IMR-90 (cell line): ENCODE measurements at regions of chr11 and their contacts with region 1.

Region 1: GRCh38 chr11:63783925-63784592 is 15.5 kb upstream of the ZFTA start:
- DNase-seq: no peak
- ATAC-seq: no peak
- H3K4me3 ChIP-seq: no peak overlapping the region
- H3K27ac ChIP-seq: no peak overlapping the region
- H3K4me1 ChIP-seq: no peaks in the 10 kb centered on the region
- H3K27me3 ChIP-seq: no peaks in the 10 kb centered on the region
- CTCF ChIP-seq: no peak
- POLR2A ChIP-seq: no peak
- RAD21 ChIP-seq: no peak

Region 2: DNA sequence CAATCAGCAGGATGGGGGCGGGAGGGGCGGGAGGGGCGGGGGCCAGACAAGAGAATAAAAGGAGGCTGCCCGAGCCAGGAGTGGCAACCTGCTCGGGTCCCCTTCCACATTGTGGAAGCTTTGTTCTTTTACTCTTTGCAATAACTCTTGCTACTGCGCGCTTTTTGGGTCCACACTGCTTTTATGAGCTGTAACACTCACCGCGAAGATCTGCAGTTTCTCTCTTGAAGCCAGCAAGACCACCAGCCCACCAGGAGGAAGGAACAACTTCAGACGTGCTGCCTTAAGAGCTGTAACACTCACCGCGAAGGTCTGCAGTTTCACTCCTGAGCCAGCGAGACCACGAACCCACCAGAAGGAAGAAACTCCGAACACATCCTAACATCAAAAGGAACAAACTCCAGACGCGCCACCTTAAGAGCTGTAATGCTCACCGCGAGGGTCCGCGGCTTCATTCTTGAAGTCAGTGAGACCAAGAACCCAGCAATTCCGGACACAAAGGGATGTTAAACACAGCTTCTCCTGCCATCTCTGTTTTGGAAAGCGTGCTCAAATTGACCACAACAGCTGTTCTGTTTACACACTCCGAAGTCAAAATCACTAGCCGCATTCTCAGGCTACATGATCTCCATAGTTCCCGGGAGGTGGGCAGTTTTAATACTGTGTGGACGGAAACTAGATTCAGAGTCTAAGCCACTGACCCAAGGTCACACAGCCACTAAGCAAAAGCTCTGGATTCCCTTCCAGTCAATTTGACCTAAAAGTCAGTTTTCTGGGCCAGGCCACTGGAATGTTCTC is 232.8 kb before region 1 on chr11:
- CTCF ChIA-PET with region 1: no interaction called
- POLR2A ChIA-PET with region 1: no interaction called
- dilution Hi-C with region 1: no loop called
- in situ Hi-C with region 1: no loop called
- intact Hi-C with region 1: no loop called
- DNase-seq: no peak
- ATAC-seq: no peak
- H3K4me3 ChIP-seq: no peak overlapping the region
- H3K27ac ChIP-seq: no peak overlapping the region
- H3K4me1 ChIP-seq: no peaks in the 10 kb centered on the region
- H3K27me3 ChIP-seq: peaks cover 17% of the 10 kb centered on the region
- CTCF ChIP-seq: no peak
- POLR2A ChIP-seq: no peak
- RAD21 ChIP-seq: no peak

Region 3: GRCh38 chr11:63802637-63803414 is 18.8 kb after region 1 on chr11:
- CTCF ChIA-PET with region 1: no interaction called
- POLR2A ChIA-PET with region 1: no interaction called
- dilution Hi-C with region 1: no loop called
- in situ Hi-C with region 1: no loop called
- intact Hi-C with region 1: loop called (anchors 1 kb)
- DNase-seq: peak; percentile 57
- ATAC-seq: peak; percentile 79
- H3K4me3 ChIP-seq: no peak overlapping the region
- H3K27ac ChIP-seq: no peak overlapping the region
- H3K4me1 ChIP-seq: peaks cover 9% of the 10 kb centered on the region
- H3K27me3 ChIP-seq: no peaks in the 10 kb centered on the region
- CTCF ChIP-seq: no peak
- POLR2A ChIP-seq: no peak
- RAD21 ChIP-seq: no peak

Region 4: DNA sequence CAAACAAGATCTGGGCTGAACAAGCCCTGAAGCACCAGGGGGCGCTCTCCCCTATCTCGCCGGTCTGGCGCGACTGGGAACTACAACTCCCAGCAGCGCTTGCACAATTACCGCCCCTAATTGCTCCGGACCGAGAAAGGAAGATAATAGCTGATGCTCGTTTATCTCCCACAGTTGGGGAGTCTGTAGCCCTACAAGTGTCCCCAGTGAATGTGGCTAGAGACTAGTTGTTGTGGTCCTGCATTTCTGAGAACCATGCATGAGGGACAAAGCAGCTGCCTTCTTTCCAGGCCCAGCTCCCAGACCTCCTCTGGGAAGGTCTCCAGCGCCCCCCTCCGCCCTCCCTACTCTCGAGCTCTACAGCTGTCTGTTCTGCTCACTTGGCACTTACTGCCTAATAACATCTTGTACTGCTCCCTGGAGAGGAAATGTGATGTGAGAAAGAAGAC is 904.5 kb after region 1 on chr11:
- CTCF ChIA-PET with region 1: no interaction called
- POLR2A ChIA-PET with region 1: no interaction called
- dilution Hi-C with region 1: no loop called
- in situ Hi-C with region 1: no loop called
- intact Hi-C with region 1: no loop called
- DNase-seq: peak; percentile 79
- ATAC-seq: peak; percentile 98
- H3K4me3 ChIP-seq: peak overlapping the region; percentile 59
- H3K27ac ChIP-seq: no peak overlapping the region
- H3K4me1 ChIP-seq: no peaks in the 10 kb centered on the region; the same call in 1 of the 2 replicates
- H3K27me3 ChIP-seq: peaks cover 63% of the 10 kb centered on the region
- CTCF ChIP-seq: peak; percentile 92
- POLR2A ChIP-seq: no peak
- RAD21 ChIP-seq: peak; percentile 68